Sciatic nerve (tissue), 2 donors: ENCODE measurements at regions of chr15 and their contacts with region 1.

Region 1: DNA sequence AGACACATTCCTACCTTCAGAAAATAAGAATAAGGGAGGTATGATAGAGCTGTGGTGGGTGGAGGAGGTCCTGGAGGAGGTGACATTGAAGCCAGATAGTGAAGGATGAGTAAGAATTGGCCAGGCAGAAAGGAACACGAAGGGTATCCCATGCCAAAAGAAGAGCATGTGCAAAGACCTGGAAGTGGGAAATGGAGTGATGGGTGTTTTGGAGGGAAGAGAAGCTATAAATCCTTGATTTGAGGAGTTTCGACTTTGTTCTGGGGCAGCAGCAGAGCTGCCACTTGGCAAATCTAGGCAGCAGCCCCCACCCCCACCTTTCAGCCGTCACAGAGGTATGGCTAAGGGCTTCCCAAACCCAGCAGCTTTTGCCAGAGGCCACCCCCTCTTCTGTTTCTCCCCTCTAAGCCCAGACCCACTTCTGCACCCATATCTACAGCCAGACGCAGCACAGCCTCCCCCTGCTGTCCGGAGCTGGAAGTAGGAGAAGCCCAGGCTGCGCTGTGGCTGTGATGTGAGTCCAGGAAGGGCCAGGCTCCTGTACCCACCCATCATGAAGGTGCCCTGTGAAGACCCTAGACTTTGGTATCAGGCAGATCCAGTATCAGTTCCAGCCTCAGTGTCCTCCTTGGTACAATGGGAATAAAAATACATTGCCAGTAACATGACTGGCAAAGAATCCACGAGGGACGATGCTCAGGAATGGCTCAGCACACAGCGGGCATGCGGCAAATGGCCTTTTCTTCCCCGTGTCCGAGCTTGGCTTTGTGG is 188.7 kb upstream of the LINGO1 start:
- DNase-seq: peak; percentile 72
- ATAC-seq: peak; percentile 82

Region 2: DNA sequence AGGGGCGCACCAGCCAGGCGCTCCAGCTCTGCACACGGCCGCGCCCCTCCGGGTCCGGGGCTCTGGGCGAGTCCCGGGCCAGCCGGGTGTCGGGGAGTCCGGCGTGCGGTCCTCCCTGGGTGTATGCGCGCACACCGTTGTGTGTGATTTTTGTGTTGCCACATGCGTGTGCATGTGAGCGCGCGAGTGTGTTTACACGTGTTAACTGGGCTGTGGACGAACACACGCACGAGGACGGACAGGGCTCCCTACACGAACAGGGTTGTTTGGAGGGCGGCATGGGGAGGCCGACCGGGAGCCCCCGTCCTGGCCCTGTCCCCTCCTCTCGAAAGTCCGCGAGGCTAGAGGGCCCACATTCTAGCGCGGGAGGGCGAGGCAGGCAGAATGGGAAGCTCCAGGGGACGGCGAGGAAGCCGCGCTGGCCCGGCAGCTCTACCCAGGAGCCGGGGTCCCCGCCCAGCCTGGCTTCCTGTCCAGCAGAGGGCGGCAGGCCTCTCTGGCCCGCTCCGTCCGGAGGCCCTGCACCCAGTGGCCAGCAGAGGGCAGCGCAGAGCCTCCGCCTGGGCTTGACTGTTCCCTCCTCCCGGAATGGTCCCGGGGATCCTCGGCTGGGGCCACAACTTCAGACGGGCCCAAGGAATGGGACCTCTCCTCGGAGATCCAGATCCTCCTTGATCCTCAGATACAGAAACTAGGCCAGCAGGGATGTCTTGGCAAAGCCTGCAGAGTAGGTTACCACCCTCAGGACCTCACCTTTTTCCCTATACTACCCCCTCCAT is 188.1 kb before region 1 on chr15:
- intact Hi-C with region 1: loop called (anchors 10 kb)
- DNase-seq: peak; percentile 94
- ATAC-seq: peak; percentile 94

Region 3: DNA sequence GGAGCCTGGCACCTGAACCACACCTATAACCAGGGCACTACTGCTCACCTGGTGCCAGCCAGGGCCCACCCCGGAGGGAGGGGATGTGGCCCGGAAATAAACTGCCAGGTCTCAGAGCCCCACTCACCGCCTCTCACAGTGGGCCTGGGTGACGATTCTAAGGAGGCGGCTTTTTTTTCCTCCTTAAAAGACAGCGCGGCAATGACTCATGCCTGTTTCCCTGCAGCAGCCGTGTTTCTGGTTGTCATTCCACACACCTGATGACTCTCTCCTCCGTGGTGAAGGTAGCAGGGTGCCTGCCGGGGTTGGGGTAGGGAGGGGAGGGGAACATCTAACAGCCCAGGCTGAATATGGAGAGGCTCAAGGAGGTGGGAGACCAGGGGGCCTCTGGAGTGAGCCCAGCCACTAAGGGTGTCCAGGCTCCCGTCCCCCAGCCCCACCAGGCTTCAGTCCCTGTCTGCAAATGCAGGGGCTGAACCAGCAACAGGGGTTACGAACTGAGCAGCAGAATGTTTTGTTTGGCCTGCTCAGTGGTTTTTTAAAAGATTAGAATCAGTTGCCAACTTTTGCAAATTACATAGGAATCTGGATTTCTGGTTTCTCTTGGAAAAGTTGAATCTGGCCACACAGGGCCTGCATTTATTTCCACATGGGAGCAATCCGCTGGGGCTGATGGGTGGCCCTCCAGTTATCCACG is 61.3 kb before region 1 on chr15:
- intact Hi-C with region 1: no loop called
- DNase-seq: no peak
- ATAC-seq: peak; percentile 37